Activated CD4-positive, alpha-beta T cell treated with anti-CD3 and anti-CD28 coated beads for 36 hours (primary cell): ENCODE measurements at regions of chr19 and their contacts with region 1.

Region 1: DNA sequence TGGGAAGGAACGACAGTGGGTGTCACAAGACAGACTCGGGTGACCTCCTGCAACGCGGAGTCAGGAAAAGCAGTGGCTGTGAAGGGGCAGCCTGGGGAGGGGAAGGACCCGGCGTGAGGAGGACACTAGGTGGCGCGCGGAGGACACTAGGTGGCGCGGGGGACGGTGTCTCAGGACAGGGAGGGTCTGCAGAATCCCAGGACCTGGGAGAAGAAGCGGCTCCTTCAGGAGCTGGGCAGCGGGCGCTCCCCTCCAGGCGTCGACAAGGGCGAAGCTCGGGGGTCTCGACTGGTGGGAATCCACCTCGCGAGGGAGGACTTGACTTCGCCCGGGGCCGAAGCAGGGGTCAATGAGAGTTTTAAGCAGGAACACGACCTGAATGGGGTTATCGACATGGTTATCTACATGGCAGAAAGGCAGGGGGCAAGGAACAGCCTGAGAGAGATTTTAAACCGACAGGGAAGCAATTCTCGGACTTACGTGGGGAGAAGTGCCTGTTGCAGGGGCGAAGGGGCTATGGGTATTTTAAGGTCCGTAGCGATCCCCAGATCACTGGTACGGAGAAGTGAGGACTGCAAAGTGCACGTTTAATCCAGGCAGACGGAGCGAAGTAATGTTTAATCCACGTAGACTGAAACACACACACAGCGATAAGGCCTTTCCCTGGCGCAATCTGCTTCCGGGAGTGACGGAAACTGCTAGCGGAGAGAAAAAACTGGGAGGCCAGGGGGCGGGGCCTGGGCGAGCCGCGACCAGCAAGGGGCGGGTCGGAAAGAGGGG is at the start of gene ZNF616:
- DNase-seq: peak; percentile 90
- ATAC-seq: peak; percentile 81
- H3K4me3 Mint-ChIP-seq: peak within 1 kb of the TSS; percentile 96
- H3K27ac Mint-ChIP-seq: peak within 1 kb of the TSS; percentile 97
- H3K4me1 Mint-ChIP-seq: peaks cover 27% of the 10 kb centered on the region
- H3K27me3 Mint-ChIP-seq: no peaks in the 10 kb centered on the region
- total RNA-seq, gene ZNF616: 13.9 to 15.7 TPM

Region 2: DNA sequence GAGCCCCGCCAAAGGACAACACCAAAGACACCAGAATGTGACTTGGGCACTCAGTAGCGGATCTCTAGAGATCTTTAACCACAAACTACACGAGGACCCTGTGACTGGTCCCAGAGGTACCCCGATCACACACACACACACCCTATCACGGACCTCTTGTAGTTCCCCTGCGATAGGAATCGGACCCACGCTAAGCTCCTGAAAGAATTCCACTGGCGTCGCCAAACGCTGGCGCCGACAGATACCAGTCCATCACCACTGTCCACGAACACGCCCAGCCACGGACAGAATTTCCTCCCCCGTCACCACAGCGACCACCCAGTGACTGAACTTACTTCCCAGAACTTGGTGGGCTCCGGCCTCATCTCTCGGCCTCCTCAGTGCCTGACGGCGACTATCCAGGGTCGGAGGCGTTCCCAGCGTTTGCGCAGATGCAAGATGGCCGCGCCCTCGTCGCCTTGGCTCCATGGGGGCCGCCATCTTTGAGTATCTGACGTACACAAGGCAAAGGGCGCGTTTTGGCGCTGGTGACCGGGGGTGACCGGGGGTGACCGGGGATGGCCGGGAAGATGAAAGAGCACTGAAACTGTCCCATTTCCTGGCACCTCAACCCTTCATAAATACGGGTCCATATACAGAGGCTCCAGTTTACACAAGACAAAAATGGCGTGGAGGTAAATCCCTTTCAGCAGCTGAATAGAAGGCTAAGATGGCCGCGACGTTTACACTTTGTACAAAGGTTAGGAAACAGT is 131.5 kb before region 1 on chr19 and contains the start of gene ZNF615:
- CTCF ChIA-PET with region 1: no interaction called
- POLR2A ChIA-PET with region 1: no interaction called
- intact Hi-C with region 1: loop called in 1 of 2 experiments (anchors 1 kb)
- DNase-seq: peak; percentile 93
- ATAC-seq: peak; percentile 97
- H3K4me3 Mint-ChIP-seq: peak within 1 kb of the TSS; percentile 90
- H3K27ac Mint-ChIP-seq: peak within 1 kb of the TSS; percentile 98
- H3K4me1 Mint-ChIP-seq: peaks cover 15% of the 10 kb centered on the region
- H3K27me3 Mint-ChIP-seq: no peaks in the 10 kb centered on the region
- total RNA-seq, gene ZNF615: 8.7 to 9.0 TPM

Region 3: DNA sequence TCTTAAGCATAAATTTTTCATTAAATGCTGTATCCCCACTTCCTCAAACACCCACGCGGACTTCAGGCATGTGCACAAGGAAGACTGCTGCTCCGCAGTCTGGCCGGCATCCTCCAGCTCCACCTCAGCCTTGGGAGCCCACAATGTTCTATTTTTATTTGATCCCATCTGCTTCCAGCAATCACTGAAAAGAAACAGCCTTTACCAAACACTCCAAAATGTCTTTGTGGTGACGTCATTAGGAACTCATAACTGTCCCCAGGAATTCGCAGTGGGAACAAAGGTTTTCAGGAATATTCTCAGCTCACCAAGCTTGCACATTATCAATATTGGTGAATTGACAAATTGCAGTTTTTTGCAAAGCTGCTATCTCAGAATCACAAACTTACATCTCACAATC is 28.7 kb before region 1 on chr19:
- CTCF ChIA-PET with region 1: no interaction called
- POLR2A ChIA-PET with region 1: no interaction called
- intact Hi-C with region 1: no loop called
- DNase-seq: no peak
- ATAC-seq: no peak
- H3K4me3 Mint-ChIP-seq: no peak overlapping the region
- H3K27ac Mint-ChIP-seq: no peak overlapping the region
- H3K4me1 Mint-ChIP-seq: no peaks in the 10 kb centered on the region
- H3K27me3 Mint-ChIP-seq: no peaks in the 10 kb centered on the region

Region 4: GRCh38 chr19:52171321-52172169 is 32.1 kb after region 1 on chr19 and contains the start of gene ZNF836:
- CTCF ChIA-PET with region 1: interaction called, 3 read pairs
- POLR2A ChIA-PET with region 1: no interaction called
- intact Hi-C with region 1: loop called (anchors 1 kb)
- DNase-seq: peak; percentile 96
- ATAC-seq: peak; percentile 96
- H3K4me3 Mint-ChIP-seq: peak within 1 kb of the TSS; percentile 87
- H3K27ac Mint-ChIP-seq: peak within 1 kb of the TSS; percentile 93
- H3K4me1 Mint-ChIP-seq: peaks cover 17% of the 10 kb centered on the region
- H3K27me3 Mint-ChIP-seq: no peaks in the 10 kb centered on the region
- total RNA-seq, gene ZNF836: 10.1 to 11.5 TPM

Region 5: DNA sequence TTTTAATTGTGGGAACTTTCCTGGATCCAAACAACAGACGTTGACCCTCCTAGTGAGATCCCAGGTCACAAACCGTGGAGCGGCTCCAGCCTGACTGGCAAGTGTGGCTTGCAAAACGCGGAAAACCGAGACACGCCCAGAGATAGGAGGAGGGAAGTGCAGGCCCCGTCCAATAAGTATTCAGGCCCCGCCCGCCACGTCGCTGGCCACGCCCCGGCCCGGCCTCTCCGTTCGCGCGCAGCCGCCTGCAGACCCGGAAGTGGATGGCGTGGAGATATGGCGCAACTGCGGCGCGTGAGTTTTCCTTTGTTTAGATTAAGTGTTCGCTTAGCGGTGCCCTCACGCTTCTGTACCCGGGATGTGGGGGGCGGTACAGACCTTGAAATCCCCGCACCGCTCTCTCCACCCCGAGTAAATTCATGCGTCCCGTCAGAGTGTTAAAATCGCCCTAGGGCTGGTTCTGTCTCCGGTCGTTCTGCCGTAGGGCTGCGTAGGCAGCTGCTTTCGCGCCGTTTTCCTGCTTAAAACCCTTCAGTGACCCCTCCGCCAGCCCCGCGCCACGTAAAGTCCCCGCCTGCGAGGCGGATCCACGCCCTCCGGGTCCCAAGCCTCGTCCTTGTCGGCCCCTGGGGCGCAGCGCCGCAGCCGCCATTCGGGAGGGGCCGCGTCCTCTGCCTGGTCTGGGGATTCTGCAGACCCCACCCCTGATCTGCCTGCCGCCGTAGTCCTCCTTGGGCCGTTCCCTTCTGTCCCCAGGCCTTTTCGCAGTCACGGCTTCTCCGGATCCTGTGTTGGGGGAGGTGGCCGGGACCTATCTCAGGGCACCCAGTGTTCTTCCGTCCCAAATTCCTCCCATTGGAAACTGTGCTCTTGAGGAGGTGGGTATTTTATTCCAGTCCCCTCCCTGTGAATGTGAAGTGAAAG is 130.2 kb after region 1 on chr19 and contains the start of gene ZNF766:
- CTCF ChIA-PET with region 1: interaction called, 4 read pairs
- POLR2A ChIA-PET with region 1: no interaction called
- intact Hi-C with region 1: loop called in 1 of 2 experiments (anchors 1 kb)
- DNase-seq: peak; percentile 98
- ATAC-seq: peak; percentile 99
- H3K4me3 Mint-ChIP-seq: peak within 1 kb of the TSS; percentile 96
- H3K27ac Mint-ChIP-seq: peak within 1 kb of the TSS; percentile 96
- H3K4me1 Mint-ChIP-seq: peaks cover 35% of the 10 kb centered on the region
- H3K27me3 Mint-ChIP-seq: no peaks in the 10 kb centered on the region
- total RNA-seq, gene ZNF766: 28.6 to 34.2 TPM

Region 6: GRCh38 chr19:52369559-52370340 is 230.3 kb after region 1 on chr19 and contains the start of gene ZNF880:
- CTCF ChIA-PET with region 1: no interaction called
- POLR2A ChIA-PET with region 1: no interaction called
- intact Hi-C with region 1: loop called in 1 of 2 experiments (anchors 1 kb)
- DNase-seq: peak; percentile 96
- ATAC-seq: peak; percentile 99
- H3K4me3 Mint-ChIP-seq: peak within 1 kb of the TSS; percentile 94
- H3K27ac Mint-ChIP-seq: peak within 1 kb of the TSS; percentile 99
- H3K4me1 Mint-ChIP-seq: peaks cover 11% of the 10 kb centered on the region
- H3K27me3 Mint-ChIP-seq: no peaks in the 10 kb centered on the region
- total RNA-seq, gene ZNF880: 11.5 to 13.7 TPM

Region 7: DNA sequence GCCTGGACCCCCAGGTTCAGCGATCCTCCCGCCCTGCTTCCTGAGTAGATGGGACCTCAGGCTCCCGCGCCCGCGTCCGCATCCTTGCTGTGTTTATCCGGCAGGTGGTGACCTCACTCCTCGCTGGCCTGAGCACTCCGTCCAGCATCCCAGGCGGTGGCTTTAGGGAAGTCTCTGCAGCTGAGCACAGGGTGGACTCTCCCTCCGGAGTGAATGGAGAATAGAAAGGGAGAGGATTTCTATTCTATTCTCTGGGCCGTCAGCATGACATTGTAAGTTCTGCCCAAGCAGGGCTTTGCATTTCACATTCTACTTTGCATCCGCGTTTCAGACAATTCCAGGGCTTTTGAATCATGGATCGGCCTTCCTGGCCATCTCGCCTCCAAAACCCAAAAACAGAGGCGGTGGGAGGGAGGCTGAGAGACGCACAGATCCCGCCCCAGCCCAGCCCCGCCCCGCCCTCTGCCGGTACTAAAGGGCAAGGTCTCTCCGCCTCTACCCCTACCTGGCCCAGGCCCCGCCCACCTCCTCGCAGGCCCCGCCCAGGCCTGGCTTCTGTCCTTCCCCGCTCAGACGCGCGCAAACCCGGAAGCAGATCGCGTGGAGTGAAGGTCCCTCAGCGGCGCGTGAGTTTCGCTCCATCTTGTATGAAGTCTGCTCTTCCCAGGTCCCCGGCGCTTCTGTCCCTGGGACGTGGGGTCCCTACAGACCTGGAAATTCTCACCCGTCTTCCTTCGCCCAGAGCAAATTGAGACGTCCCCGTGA is 1225.9 kb after region 1 on chr19 and contains the start of gene ZNF525:
- CTCF ChIA-PET with region 1: no interaction called
- POLR2A ChIA-PET with region 1: no interaction called
- intact Hi-C with region 1: loop called in 1 of 2 experiments (anchors 1 kb)
- DNase-seq: peak; percentile 98
- ATAC-seq: peak; percentile 100
- H3K4me3 Mint-ChIP-seq: peak within 1 kb of the TSS; percentile 93
- H3K27ac Mint-ChIP-seq: peak within 1 kb of the TSS; percentile 95
- H3K4me1 Mint-ChIP-seq: peaks cover 26% of the 10 kb centered on the region
- H3K27me3 Mint-ChIP-seq: no peaks in the 10 kb centered on the region
- total RNA-seq, gene ZNF525: 21.5 to 27.8 TPM